ENCODE measurements at regions of chr2 and their contacts with region 1.

Region 1: GRCh38 chr2:156332534-156333273 is at the start of gene NR4A2:
- DNase-seq: peak; percentile 92
- H3K4me3 Mint-ChIP-seq: peak within 1 kb of the TSS; percentile 87
- H3K27ac Mint-ChIP-seq: peak within 1 kb of the TSS; percentile 95
- H3K4me1 Mint-ChIP-seq: peaks cover 45% of the 10 kb centered on the region
- H3K27me3 Mint-ChIP-seq: no peaks in the 10 kb centered on the region
- total RNA-seq, gene NR4A2: 29.7 to 32.9 TPM

Region 2: GRCh38 chr2:156385242-156385641 is 52.5 kb after region 1 on chr2:
- CTCF ChIA-PET with region 1: interaction called, 3 read pairs
- intact Hi-C with region 1: loop called (anchors 1 kb)
- DNase-seq: peak; percentile 57
- H3K4me3 Mint-ChIP-seq: no peak overlapping the region
- H3K27ac Mint-ChIP-seq: peak overlapping the region; percentile 80
- H3K4me1 Mint-ChIP-seq: peaks cover 20% of the 10 kb centered on the region
- H3K27me3 Mint-ChIP-seq: no peaks in the 10 kb centered on the region

Region 3: DNA sequence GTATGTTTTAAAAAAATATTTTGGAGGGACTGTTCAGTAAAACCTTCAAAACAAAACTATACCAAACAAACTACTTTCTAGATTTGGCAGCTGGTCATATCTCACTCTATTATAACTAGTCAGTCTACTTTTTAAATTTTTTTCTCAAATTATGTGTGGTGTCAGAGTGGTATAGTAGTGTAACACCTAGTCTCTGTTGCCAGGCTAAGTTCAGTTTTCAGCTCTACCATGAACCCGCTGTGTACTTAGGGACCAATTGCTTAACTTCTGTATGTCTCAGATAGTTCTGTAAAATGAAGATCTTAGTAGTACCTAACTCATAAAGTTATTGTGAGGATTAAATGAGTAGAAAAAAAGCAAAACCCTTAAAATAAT is 157.7 kb after region 1 on chr2:
- CTCF ChIA-PET with region 1: interaction called, 9 read pairs
- intact Hi-C with region 1: loop called (anchors 1 kb)
- DNase-seq: no peak
- H3K4me3 Mint-ChIP-seq: no peak overlapping the region
- H3K27ac Mint-ChIP-seq: no peak overlapping the region
- H3K4me1 Mint-ChIP-seq: peaks cover 40% of the 10 kb centered on the region
- H3K27me3 Mint-ChIP-seq: no peaks in the 10 kb centered on the region

Region 4: GRCh38 chr2:156892467-156893281 is 560.0 kb after region 1 on chr2:
- CTCF ChIA-PET with region 1: no interaction called
- intact Hi-C with region 1: loop called (anchors 2 kb)
- DNase-seq: no peak
- H3K4me3 Mint-ChIP-seq: no peak overlapping the region
- H3K27ac Mint-ChIP-seq: no peak overlapping the region
- H3K4me1 Mint-ChIP-seq: peaks cover 5% of the 10 kb centered on the region
- H3K27me3 Mint-ChIP-seq: peaks cover 15% of the 10 kb centered on the region

Region 5: GRCh38 chr2:157443795-157444640 is 1111.3 kb after region 1 on chr2 and contains the start of gene CYTIP:
- CTCF ChIA-PET with region 1: no interaction called
- intact Hi-C with region 1: loop called (anchors 5 kb)
- DNase-seq: peak; percentile 84
- H3K4me3 Mint-ChIP-seq: peak within 1 kb of the TSS; percentile 97
- H3K27ac Mint-ChIP-seq: peak within 1 kb of the TSS; percentile 100
- H3K4me1 Mint-ChIP-seq: peaks cover 40% of the 10 kb centered on the region
- H3K27me3 Mint-ChIP-seq: no peaks in the 10 kb centered on the region
- total RNA-seq, gene CYTIP: 599 to 610 TPM

Measured in activated naive CD4-positive, alpha-beta T cell treated with anti-CD3 and anti-CD28 coated beads for 36 hours (primary cell).